CD8-positive, alpha-beta memory T cell (primary cell): ENCODE measurements at regions of chr12 and their contacts with region 1.

Region 1: GRCh38 chr12:54368709-54369583 is 4.7 kb upstream of the GPR84 start:
- DNase-seq: peak; percentile 75 to 91 (median 80)
- H3K4me3 ChIP-seq: peak overlapping the region; percentile 56
- H3K4me3 Mint-ChIP-seq: peak overlapping the region; percentile 34 to 77 (median 62)
- H3K27ac ChIP-seq: no peak overlapping the region
- H3K27ac Mint-ChIP-seq: peak overlapping the region in 7 of 8 donors; percentile 10 to 86 (median 62)
- H3K4me1 ChIP-seq: peaks cover 21% of the 10 kb centered on the region
- H3K4me1 Mint-ChIP-seq: peaks cover 22 to 34% (median 28%) of the 10 kb centered on the region in 3 donors
- H3K27me3 ChIP-seq: no peaks in the 10 kb centered on the region
- H3K27me3 Mint-ChIP-seq: peaks cover 0 to 2% of the 10 kb centered on the region in 2 donors

Region 2: GRCh38 chr12:54068418-54069070 is 300.4 kb before region 1 on chr12:
- CTCF ChIA-PET with region 1: no interaction called
- POLR2A ChIA-PET with region 1: no interaction called
- DNase-seq: no peak
- H3K4me3 ChIP-seq: no peak overlapping the region
- H3K4me3 Mint-ChIP-seq: no peak overlapping the region
- H3K27ac ChIP-seq: no peak overlapping the region
- H3K27ac Mint-ChIP-seq: no peak overlapping the region
- H3K4me1 ChIP-seq: no peaks in the 10 kb centered on the region
- H3K4me1 Mint-ChIP-seq: no peaks in the 10 kb centered on the region
- H3K27me3 ChIP-seq: peaks cover 8% of the 10 kb centered on the region
- H3K27me3 Mint-ChIP-seq: peaks cover 30 to 70% of the 10 kb centered on the region in 2 donors

Region 3: GRCh38 chr12:54251667-54252284 is 117.2 kb before region 1 on chr12:
- CTCF ChIA-PET with region 1: interaction called, 11 read pairs
- POLR2A ChIA-PET with region 1: interaction called, 3 read pairs
- DNase-seq: peak in 2 of 5 donors; percentile 32 to 45
- H3K4me3 ChIP-seq: no peak overlapping the region
- H3K4me3 Mint-ChIP-seq: no peak overlapping the region
- H3K27ac ChIP-seq: no peak overlapping the region
- H3K27ac Mint-ChIP-seq: peak overlapping the region in 1 of 8 donors; percentile 26
- H3K4me1 ChIP-seq: no peaks in the 10 kb centered on the region
- H3K4me1 Mint-ChIP-seq: peaks cover 3 to 9% (median 7%) of the 10 kb centered on the region in 3 donors
- H3K27me3 ChIP-seq: no peaks in the 10 kb centered on the region
- H3K27me3 Mint-ChIP-seq: no peaks in the 10 kb centered on the region

Region 4: DNA sequence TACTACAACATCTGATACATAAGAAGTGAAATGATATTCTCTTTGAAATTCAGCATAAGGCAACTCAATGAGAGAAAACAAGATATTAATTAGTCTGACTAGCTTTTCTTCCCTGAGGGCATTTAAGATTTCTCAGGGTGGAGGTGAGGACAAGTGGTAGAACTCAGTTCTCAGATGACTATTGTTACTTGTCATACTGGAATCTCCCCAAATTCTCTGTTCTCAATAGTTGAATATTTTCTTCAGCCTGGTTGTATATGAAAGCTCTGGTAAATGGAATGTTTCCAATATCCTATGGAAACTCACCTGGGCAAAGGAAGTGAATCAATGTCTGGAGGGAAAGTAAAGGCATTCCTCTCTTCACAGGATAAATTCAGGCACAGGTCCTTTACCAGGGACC is 68.3 kb after region 1 on chr12:
- CTCF ChIA-PET with region 1: no interaction called
- POLR2A ChIA-PET with region 1: no interaction called
- DNase-seq: no peak
- H3K4me3 ChIP-seq: no peak overlapping the region
- H3K4me3 Mint-ChIP-seq: no peak overlapping the region
- H3K27ac ChIP-seq: no peak overlapping the region
- H3K27ac Mint-ChIP-seq: peak overlapping the region in 2 of 8 donors; percentile 18 to 54
- H3K4me1 ChIP-seq: peaks cover 16% of the 10 kb centered on the region
- H3K4me1 Mint-ChIP-seq: peaks cover 18 to 19% (median 18%) of the 10 kb centered on the region in 3 donors
- H3K27me3 ChIP-seq: no peaks in the 10 kb centered on the region
- H3K27me3 Mint-ChIP-seq: peaks cover 0 to 8% of the 10 kb centered on the region in 2 donors

Region 5: GRCh38 chr12:54460317-54460923 is 91.5 kb after region 1 on chr12:
- CTCF ChIA-PET with region 1: no interaction called
- POLR2A ChIA-PET with region 1: no interaction called
- DNase-seq: no peak
- H3K4me3 ChIP-seq: no peak overlapping the region
- H3K4me3 Mint-ChIP-seq: no peak overlapping the region
- H3K27ac ChIP-seq: no peak overlapping the region
- H3K27ac Mint-ChIP-seq: no peak overlapping the region
- H3K4me1 ChIP-seq: no peaks in the 10 kb centered on the region
- H3K4me1 Mint-ChIP-seq: no peaks in the 10 kb centered on the region
- H3K27me3 ChIP-seq: no peaks in the 10 kb centered on the region
- H3K27me3 Mint-ChIP-seq: peaks cover 7 to 32% of the 10 kb centered on the region in 2 donors

Region 6: GRCh38 chr12:54509617-54510016 is 140.7 kb after region 1 on chr12:
- CTCF ChIA-PET with region 1: no interaction called
- POLR2A ChIA-PET with region 1: no interaction called
- DNase-seq: no peak
- H3K4me3 ChIP-seq: no peak overlapping the region
- H3K4me3 Mint-ChIP-seq: no peak overlapping the region
- H3K27ac ChIP-seq: no peak overlapping the region
- H3K27ac Mint-ChIP-seq: no peak overlapping the region
- H3K4me1 ChIP-seq: no peaks in the 10 kb centered on the region
- H3K4me1 Mint-ChIP-seq: peaks cover 15 to 29% (median 22%) of the 10 kb centered on the region in 3 donors
- H3K27me3 ChIP-seq: no peaks in the 10 kb centered on the region
- H3K27me3 Mint-ChIP-seq: no peaks in the 10 kb centered on the region